Common myeloid progenitor, CD34-positive (primary cell): ENCODE measurements at regions of chr20 and their contacts with region 1.

Region 1: GRCh38 chr20:32521780-32522525 is 63.2 kb downstream of the NOL4L start:
- DNase-seq: peak in 2 of 3 donors; percentile 69 to 77
- H3K4me3 ChIP-seq: no peak overlapping the region
- H3K27ac ChIP-seq: no peak overlapping the region
- H3K4me1 ChIP-seq: peaks cover 0 to 72% (median 69%) of the 10 kb centered on the region in 4 experiments
- H3K27me3 ChIP-seq: no peaks in the 10 kb centered on the region

Region 2: DNA sequence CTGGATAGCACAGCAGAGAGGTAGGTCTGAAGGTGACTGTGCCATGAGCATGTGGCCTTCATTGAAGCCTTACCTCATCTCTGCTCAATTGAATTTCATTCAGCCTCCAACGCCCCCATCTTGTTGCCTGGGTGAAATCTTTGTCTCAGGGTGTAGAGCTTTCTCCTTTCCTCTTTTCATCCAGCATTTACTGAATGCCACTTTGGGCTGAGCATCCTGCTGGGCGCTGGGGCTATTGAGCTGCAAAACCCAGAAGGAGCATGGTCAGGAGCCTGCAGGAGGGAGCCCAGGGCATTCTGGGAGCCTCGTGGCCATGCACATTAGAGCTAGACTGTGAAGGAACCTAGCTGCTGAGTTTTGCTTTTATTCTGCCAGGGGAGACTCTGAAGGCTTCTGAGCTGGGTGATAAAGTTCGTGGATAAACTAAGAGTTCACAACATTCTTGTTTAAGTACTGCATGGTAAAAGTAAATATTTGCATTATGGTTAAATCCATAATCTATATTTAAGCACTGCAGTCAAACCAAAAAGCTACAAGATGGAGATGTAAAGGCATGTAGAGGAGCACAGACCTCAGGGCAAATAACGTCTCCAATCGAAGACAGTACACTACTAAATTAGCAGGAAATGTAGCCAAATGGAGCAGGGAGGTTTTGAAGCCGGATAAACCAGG is 177.0 kb before region 1 on chr20:
- CTCF ChIA-PET with region 1: no interaction called
- POLR2A ChIA-PET with region 1: no interaction called
- DNase-seq: no peak
- H3K4me3 ChIP-seq: no peak overlapping the region
- H3K27ac ChIP-seq: no peak overlapping the region
- H3K4me1 ChIP-seq: no peaks in the 10 kb centered on the region
- H3K27me3 ChIP-seq: no peaks in the 10 kb centered on the region

Region 3: GRCh38 chr20:32509639-32510066 is 12.3 kb before region 1 on chr20:
- CTCF ChIA-PET with region 1: interaction called, 19 read pairs
- POLR2A ChIA-PET with region 1: no interaction called
- DNase-seq: peak; percentile 87 to 98 (median 97)
- H3K4me3 ChIP-seq: peak overlapping the region in 3 of 7 experiments; percentile 29 to 62 (median 38)
- H3K27ac ChIP-seq: peak overlapping the region in 1 of 2 experiments; percentile 55
- H3K4me1 ChIP-seq: peaks cover 17 to 77% (median 68%) of the 10 kb centered on the region in 4 experiments
- H3K27me3 ChIP-seq: no peaks in the 10 kb centered on the region

Region 4: DNA sequence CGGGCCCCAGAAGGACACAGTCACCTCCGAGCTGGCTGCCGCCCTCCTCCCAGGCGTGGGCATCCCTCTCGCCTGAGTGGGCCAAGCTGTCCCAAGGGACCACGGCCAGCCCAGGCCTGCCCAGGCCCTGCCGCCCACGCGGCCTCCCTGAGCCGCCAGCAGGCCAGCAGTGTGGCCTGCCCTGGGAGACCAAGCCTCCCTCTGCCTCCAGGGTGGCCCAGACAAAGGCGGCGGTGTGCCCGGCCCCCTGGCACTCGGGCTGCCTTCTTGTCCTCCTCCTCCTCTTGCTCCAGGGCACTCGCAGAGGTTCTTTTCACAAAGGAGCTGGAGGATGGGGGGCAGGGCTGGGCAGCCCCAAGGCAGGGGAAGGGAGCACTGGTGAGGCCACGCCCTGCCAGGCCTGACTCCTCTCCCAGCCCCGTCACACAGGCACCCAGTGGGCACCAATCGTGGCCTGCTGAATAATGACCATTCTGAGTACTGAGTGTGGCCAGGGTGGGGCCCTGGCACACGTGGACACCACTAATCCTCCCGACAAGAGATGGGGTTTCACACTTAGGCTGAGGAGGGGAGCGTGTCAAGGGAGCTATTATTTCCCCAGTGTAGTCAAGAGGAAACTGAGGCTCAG is 37.9 kb after region 1 on chr20:
- CTCF ChIA-PET with region 1: interaction called, 11 read pairs
- POLR2A ChIA-PET with region 1: no interaction called
- DNase-seq: no peak
- H3K4me3 ChIP-seq: no peak overlapping the region
- H3K27ac ChIP-seq: no peak overlapping the region
- H3K4me1 ChIP-seq: peaks cover 0 to 54% (median 40%) of the 10 kb centered on the region in 4 experiments
- H3K27me3 ChIP-seq: no peaks in the 10 kb centered on the region

Region 5: GRCh38 chr20:32626859-32627636 is 105.1 kb after region 1 on chr20:
- CTCF ChIA-PET with region 1: interaction called, 33 read pairs
- POLR2A ChIA-PET with region 1: interaction called, 3 read pairs
- DNase-seq: peak; percentile 86 to 98 (median 96)
- H3K4me3 ChIP-seq: peak overlapping the region in 5 of 7 experiments; percentile 24 to 58 (median 55)
- H3K27ac ChIP-seq: peak overlapping the region in 1 of 2 experiments; percentile 69
- H3K4me1 ChIP-seq: peaks cover 0 to 53% (median 34%) of the 10 kb centered on the region in 4 experiments
- H3K27me3 ChIP-seq: no peaks in the 10 kb centered on the region